PC-3 (cell line): ENCODE measurements at regions of chr7 and their contacts with region 1.

Region 1: DNA sequence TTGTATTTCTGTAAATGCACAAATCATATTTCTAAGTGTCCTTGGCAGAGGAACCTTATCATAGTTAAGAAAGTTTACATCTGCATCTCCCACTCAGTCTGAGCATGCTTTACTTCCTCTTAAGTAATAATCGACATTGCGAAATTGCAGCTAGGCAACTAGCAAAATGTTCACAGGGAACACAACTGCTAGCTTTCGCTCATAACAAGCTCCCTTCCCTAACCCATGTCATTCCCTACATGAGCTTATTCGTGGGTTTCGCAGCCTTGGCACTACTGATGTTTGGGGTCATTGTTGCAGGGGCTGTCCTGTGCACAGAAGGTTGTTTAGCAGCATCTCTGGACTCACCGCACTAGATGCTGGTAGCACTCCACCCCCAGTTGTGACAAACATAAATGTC is 71.6 kb downstream of the AHR start:
- DNase-seq: peak; percentile 76
- ATAC-seq: no peak
- H3K4me3 ChIP-seq: no peak overlapping the region
- H3K27ac ChIP-seq: peak overlapping the region; percentile 93
- H3K4me1 ChIP-seq: peaks cover 39% of the 10 kb centered on the region
- H3K27me3 ChIP-seq: no peaks in the 10 kb centered on the region
- CTCF ChIP-seq: no peak

Region 2: GRCh38 chr7:16774986-16775385 is 595.1 kb before region 1 on chr7:
- CTCF ChIA-PET with region 1: no interaction called
- POLR2A ChIA-PET with region 1: no interaction called
- intact Hi-C with region 1: no loop called
- DNase-seq: peak; percentile 42
- ATAC-seq: peak; percentile 68
- H3K4me3 ChIP-seq: no peak overlapping the region
- H3K27ac ChIP-seq: no peak overlapping the region
- H3K4me1 ChIP-seq: peaks cover 7% of the 10 kb centered on the region
- H3K27me3 ChIP-seq: no peaks in the 10 kb centered on the region
- CTCF ChIP-seq: no peak

Region 3: GRCh38 chr7:17021180-17021579 is 348.9 kb before region 1 on chr7:
- CTCF ChIA-PET with region 1: interaction called, 13 read pairs
- POLR2A ChIA-PET with region 1: no interaction called
- intact Hi-C with region 1: no loop called
- DNase-seq: no peak
- ATAC-seq: no peak
- H3K4me3 ChIP-seq: no peak overlapping the region
- H3K27ac ChIP-seq: no peak overlapping the region
- H3K4me1 ChIP-seq: 0 out of 2 replicates have a peak, but pooled peaks cover 3% of the 10 kb centered on the region
- H3K27me3 ChIP-seq: no peaks in the 10 kb centered on the region
- CTCF ChIP-seq: no peak

Region 4: GRCh38 chr7:17392846-17393245 is 22.8 kb after region 1 on chr7:
- CTCF ChIA-PET with region 1: no interaction called
- POLR2A ChIA-PET with region 1: interaction called, 21 read pairs
- intact Hi-C with region 1: no loop called
- DNase-seq: no peak
- ATAC-seq: no peak
- H3K4me3 ChIP-seq: no peak overlapping the region
- H3K27ac ChIP-seq: no peak overlapping the region
- H3K4me1 ChIP-seq: no peaks in the 10 kb centered on the region
- H3K27me3 ChIP-seq: no peaks in the 10 kb centered on the region
- CTCF ChIP-seq: no peak

Region 5: DNA sequence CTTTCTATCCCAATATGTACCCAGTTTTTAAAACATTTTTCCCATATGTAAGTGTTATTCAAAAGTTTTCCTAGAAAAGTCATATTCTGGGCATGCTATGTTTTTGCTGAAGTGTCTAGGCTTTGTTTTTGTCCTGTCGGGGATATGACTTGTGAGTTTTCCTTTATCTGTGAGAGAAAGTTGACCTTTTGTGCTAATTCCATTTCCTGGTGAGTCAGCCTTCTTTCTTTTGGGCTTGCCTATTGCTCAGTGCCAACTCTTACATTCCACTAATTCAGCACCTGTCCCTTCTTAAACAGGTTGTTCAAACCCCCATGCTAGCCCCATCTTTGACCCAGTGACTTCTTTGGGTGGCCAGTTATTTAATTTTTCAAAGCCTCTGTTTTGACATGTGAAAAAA is 74.6 kb after region 1 on chr7:
- CTCF ChIA-PET with region 1: no interaction called
- POLR2A ChIA-PET with region 1: no interaction called
- intact Hi-C with region 1: loop called (anchors 2 kb)
- DNase-seq: peak; percentile 70
- ATAC-seq: peak; percentile 70
- H3K4me3 ChIP-seq: no peak overlapping the region
- H3K27ac ChIP-seq: no peak overlapping the region
- H3K4me1 ChIP-seq: peaks cover 21% of the 10 kb centered on the region
- H3K27me3 ChIP-seq: no peaks in the 10 kb centered on the region
- CTCF ChIP-seq: no peak

Region 6: DNA sequence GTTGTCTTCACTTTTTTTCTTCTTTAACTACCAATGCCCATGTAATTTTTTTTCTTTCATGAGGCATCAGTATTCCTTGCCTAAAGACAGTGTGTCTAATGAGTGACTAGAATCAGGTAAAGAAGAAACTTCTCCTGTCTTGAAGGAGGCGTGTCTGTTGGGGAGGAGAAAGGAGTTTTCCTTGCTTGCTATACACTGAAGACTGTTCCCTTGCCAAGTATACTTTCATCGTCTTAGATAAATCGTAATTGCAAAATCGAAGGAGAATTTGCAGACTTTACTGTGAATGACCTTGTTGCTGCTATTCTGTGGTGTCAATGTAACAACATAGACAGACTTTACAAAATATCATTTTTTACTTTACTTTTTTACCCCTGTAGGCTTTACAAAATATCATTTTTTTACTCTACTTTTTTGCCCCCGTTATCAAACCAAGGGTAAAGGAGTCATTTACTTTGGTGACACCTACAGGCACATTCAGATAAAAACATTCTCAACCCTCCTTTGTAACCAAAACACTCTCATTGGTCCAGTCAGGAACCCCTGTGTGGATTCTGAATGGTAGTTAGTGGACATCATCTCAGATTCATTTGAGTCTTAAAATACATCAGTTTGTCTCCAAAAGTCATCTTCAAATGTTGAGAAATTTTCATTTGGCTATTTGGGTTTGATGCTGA is 160.8 kb after region 1 on chr7:
- CTCF ChIA-PET with region 1: no interaction called
- POLR2A ChIA-PET with region 1: no interaction called
- intact Hi-C with region 1: loop called (anchors 2 kb)
- DNase-seq: peak; percentile 36
- ATAC-seq: no peak
- H3K4me3 ChIP-seq: no peak overlapping the region
- H3K27ac ChIP-seq: no peak overlapping the region
- H3K4me1 ChIP-seq: peaks cover 36% of the 10 kb centered on the region
- H3K27me3 ChIP-seq: no peaks in the 10 kb centered on the region
- CTCF ChIP-seq: peak; percentile 70